Left colon (tissue), 2 donors: ENCODE measurements at regions of chr19 and their contacts with region 1.

Region 1: DNA sequence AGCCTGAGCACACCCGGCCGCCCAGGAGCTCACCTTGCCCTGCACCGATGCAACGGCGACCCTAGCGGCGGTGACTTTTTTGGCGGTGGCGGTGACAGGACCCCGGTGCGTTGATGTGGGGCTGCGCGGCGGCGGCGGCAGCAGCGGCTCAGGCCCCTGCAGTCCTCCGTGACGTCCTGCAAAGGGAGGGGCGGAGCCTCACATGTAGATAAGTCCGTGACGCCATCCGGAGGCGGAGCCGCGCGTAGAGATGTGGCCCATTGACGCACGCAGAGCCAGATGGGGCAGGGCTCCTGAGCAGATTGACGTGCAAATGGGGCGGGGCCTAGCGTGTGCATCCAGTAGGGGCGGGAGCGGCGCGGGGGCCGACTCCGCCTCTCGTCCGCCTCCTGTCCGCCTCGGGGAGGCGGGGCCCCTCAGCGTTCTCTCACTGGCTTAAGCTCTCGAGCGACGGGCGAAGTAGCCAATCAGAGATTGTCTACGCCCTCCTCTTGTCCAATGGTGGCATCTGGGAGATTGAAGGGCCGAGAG is at the start of gene RAB3A:
- DNase-seq: peak; percentile 100
- ATAC-seq: peak; percentile 88
- total RNA-seq, gene RAB3A: 6.3 to 6.9 TPM

Region 2: DNA sequence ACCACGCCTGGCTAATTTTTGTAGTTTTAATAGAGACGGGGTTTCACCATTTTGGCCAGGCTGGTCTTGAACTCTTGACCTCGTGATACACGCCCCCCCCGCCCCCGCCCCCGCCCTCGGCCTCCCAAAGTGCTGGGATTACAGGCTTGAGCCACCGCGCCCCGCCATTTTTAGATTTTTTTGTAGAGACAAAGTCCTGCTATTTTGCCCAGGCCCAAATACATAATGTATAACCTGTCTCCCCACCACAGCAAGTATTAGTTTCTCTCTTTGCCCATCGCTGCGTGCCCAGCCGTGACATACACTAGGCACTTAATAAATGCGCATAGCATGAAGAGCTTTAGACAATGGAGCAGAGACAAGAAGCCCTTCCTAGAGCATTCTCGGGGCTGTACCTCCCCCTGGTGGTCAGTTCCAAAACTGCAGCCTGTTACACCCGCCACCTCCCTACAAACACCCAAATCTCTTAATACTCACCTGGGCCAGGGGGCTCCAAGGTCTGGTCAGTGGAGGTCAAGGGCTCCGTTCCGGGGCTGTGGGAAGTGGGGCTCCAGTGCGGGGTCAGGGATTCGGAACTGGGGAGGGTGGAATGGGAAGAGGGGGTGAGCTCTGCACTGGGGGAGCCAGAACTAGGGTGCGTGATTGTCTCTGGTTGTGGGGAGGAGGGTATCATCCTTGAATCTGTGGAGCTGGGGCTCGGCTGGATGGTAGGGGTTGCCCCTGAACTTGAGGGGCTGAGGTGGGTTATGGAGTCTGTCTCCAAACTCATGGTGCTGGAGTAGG is 47.9 kb after region 1 on chr19:
- intact Hi-C with region 1: loop called in 1 of 2 experiments (anchors 2 kb)
- DNase-seq: peak; percentile 54 to 86
- ATAC-seq: no peak

Region 3: GRCh38 chr19:18322759-18323460 is 119.0 kb after region 1 on chr19 and contains the start of gene LSM4:
- intact Hi-C with region 1: loop called in 1 of 2 experiments (anchors 10 kb)
- DNase-seq: peak; percentile 99 to 100
- ATAC-seq: peak; percentile 64
- total RNA-seq, gene LSM4: 106 to 148 TPM